Activated T-helper 2 cell treated with anti-CD3 and anti-CD28 coated beads, Interferon-gamma antibody, Interleukin-2, Interleukin-4, amounts not matched to agents 10 μg/mL and 5 μg/mL and 100 μg/mL, durations not matched to agents 14 hours and 24 hours and 36 hours (primary cell): ENCODE measurements at regions of chr12 and their contacts with region 1.

Region 1: DNA sequence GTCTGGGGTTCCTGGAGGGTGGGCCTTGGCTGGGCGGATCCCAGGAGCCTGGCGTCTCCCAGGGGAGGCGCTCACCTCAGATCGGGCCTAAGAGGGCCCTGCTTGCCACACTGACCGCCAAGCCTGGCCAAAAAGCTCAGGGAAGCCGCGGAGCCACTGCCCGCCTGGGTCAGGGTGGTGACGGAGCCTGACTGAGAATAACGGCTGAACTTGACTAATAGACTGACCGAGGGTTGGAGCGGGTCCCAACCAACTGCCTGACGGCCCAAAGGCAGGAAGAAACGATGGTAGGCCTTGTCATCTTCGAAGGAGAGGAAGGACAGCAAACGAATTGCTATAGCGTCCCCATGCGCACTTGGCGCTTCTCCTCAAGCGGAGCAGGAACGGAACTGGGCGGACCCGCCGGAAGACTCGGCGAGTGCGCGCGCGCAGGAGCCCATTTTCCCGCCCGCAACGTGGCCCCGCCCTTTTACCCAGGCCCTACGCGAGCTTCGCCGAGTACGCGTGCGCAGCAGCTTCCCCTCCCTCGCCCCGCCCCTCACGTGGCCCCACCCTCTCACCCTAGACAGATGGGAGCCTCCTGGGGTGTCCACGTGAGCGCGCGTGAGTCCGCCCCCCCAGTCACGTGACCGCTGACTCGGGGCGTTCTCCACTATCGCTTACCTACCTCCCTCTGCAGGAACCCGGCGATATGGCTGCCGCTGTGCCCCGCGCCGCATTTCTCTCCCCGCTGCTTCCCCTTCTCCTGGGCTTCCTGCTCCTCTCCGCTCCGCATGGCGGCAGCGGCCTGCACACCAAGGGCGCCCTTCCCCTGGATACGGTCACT is at the starts of genes ERP29 and TMEM116:
- DNase-seq: peak; percentile 98
- H3K4me3 Mint-ChIP-seq: peak within 1 kb of the TSS; percentile 94
- H3K27ac Mint-ChIP-seq: peak within 1 kb of the TSS; percentile 94
- H3K4me1 Mint-ChIP-seq: peaks cover 40% of the 10 kb centered on the region
- H3K27me3 Mint-ChIP-seq: no peaks in the 10 kb centered on the region
- total RNA-seq, gene ERP29: 58.9 and 59.9 TPM in 2 replicates
- total RNA-seq, gene TMEM116: 7.2 and 9.0 TPM in 2 replicates

Region 2: DNA sequence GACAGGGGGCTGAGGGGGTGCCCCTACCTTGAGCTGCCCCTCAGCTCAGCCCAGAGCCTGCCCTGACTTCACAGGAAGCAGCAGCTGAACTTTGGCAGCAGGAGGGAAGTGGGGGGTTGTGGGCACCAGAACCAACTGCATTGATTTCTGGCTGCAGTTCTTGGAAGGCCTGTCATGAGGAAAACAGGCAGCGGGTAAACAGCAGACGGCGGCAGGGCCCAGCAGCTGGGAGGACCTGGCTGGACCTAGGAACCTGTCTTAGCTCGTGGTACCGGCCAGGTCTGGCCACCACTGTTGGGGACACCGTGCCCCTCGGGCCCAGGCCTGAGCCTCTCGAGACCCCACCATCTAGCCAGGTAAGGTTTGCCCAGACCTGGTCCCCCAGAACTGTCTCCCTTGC is 938.4 kb before region 1 on chr12:
- intact Hi-C with region 1: no loop called
- DNase-seq: no peak
- H3K4me3 Mint-ChIP-seq: no peak overlapping the region
- H3K27ac Mint-ChIP-seq: no peak overlapping the region
- H3K4me1 Mint-ChIP-seq: no peaks in the 10 kb centered on the region
- H3K27me3 Mint-ChIP-seq: peaks cover 12% of the 10 kb centered on the region

Region 3: DNA sequence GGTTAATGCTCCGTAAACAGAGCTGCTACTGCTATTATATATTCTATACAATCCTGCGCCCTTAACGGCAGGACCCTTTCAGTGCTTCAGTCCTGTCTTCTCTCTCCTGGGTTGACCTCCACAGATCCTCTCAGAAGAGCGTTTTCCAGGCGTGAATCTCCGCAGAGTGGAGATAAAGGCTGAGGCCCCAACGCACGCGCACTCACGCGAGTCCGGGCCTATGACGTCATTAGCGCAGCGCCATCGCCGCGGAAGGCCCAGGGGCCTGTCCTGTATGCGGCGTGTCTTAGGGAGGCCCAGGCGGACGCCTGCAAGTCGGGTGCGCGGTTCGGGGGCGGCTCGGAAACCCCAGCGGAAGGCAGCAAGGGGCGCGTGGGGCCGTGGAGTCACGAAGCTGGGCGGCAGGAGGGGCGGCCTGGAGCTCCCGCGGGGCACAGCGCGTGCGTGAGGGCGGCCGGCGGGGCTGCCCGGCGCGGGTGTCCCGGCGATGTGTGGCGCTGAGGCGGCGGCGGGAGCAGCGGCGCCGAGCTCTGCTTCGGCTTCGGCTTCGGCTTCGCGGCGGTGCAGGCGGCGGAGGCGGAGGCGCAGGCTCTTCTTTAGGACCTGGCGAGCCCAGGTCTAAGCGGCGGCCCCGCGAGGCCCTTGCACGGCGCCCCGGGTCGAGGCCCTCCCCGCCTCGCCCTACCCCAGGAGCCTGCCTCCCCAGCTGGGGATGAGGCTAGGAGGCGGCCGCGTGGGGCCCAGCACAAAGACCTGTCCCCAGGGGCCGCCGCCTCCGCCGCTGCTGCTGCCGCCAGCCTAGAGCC is 171.0 kb before region 1 on chr12 and contains the start of gene MAPKAPK5:
- intact Hi-C with region 1: loop called (anchors 10 kb)
- DNase-seq: peak; percentile 95
- H3K4me3 Mint-ChIP-seq: peak within 1 kb of the TSS; percentile 97
- H3K27ac Mint-ChIP-seq: peak within 1 kb of the TSS; percentile 98
- H3K4me1 Mint-ChIP-seq: peaks cover 36% of the 10 kb centered on the region
- H3K27me3 Mint-ChIP-seq: no peaks in the 10 kb centered on the region
- total RNA-seq, gene MAPKAPK5: 66.4 and 68.1 TPM in 2 replicates

Region 4: GRCh38 chr12:111993292-111994150 is 19.5 kb before region 1 on chr12:
- intact Hi-C with region 1: loop called (anchors 1 kb)
- DNase-seq: peak; percentile 40
- H3K4me3 Mint-ChIP-seq: peak overlapping the region; percentile 79
- H3K27ac Mint-ChIP-seq: peak overlapping the region; percentile 44
- H3K4me1 Mint-ChIP-seq: peaks cover 58% of the 10 kb centered on the region
- H3K27me3 Mint-ChIP-seq: no peaks in the 10 kb centered on the region

Region 5: GRCh38 chr12:112108201-112109079 is 95.5 kb after region 1 on chr12 and contains the start of gene NAA25:
- intact Hi-C with region 1: loop called (anchors 2 kb)
- DNase-seq: peak; percentile 84
- H3K4me3 Mint-ChIP-seq: peak within 1 kb of the TSS; percentile 97
- H3K27ac Mint-ChIP-seq: peak within 1 kb of the TSS; percentile 98
- H3K4me1 Mint-ChIP-seq: peaks cover 47% of the 10 kb centered on the region
- H3K27me3 Mint-ChIP-seq: no peaks in the 10 kb centered on the region
- total RNA-seq, gene NAA25: 43.3 and 48.7 TPM in 2 replicates

Region 6: GRCh38 chr12:112382232-112382796 is 369.3 kb after region 1 on chr12 and contains the start of gene HECTD4:
- intact Hi-C with region 1: loop called (anchors 5 kb)
- DNase-seq: peak; percentile 89
- H3K4me3 Mint-ChIP-seq: peak within 1 kb of the TSS; percentile 99
- H3K27ac Mint-ChIP-seq: peak within 1 kb of the TSS; percentile 96
- H3K4me1 Mint-ChIP-seq: peaks cover 34% of the 10 kb centered on the region
- H3K27me3 Mint-ChIP-seq: no peaks in the 10 kb centered on the region
- total RNA-seq, gene HECTD4: 34.7 and 36.6 TPM in 2 replicates